MCF 10A (cell line): ENCODE measurements at regions of chr2 and their contacts with region 1.

Region 1: DNA sequence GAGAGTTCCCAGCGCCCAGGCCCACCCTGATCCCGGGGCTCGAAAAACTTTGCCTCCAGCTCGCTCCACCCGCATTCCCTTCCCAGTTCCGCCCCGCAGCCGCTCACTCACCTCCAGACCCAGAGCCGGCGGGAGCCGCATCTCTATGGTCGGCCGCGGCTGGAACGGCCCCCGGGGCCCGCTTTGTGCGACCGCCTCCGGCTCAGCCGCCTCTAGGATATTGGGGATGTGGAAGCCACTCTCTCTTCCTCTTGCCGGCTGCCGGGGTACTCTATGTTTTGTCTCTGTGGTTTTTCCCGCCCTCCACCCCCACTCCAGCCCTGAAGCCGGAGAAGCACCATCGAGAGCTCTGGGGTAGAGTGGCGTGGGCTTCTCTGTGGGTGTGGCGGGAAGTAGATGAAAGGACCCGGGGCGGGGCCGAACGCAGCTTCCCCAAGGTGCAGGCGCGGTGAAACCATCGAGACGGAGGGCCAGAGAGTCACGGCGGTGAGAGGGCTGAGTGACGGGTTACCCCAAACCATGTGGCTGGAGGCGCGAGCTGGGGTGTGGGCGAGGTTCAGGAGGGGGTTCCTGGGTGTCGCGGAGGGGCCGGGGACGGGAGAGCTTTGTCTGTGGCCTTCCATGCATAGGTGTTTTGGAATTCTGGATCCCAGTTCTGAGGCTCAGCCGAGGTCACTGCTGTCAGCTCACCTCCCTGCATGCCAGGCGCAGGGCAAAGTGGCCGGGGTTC is at the starts of genes BCS1L and ZNF142:
- DNase-seq: peak; percentile 94
- H3K4me3 Mint-ChIP-seq: peak within 1 kb of the TSS; percentile 92
- H3K27ac Mint-ChIP-seq: peak within 1 kb of the TSS; percentile 82
- H3K4me1 Mint-ChIP-seq: peaks cover 27% of the 10 kb centered on the region
- H3K27me3 Mint-ChIP-seq: no peaks in the 10 kb centered on the region
- CTCF ChIP-seq: no peak
- total RNA-seq, gene BCS1L: 71.1 and 96.0 TPM in 2 replicates
- total RNA-seq, gene ZNF142: 33.7 and 37.8 TPM in 2 replicates

Region 2: DNA sequence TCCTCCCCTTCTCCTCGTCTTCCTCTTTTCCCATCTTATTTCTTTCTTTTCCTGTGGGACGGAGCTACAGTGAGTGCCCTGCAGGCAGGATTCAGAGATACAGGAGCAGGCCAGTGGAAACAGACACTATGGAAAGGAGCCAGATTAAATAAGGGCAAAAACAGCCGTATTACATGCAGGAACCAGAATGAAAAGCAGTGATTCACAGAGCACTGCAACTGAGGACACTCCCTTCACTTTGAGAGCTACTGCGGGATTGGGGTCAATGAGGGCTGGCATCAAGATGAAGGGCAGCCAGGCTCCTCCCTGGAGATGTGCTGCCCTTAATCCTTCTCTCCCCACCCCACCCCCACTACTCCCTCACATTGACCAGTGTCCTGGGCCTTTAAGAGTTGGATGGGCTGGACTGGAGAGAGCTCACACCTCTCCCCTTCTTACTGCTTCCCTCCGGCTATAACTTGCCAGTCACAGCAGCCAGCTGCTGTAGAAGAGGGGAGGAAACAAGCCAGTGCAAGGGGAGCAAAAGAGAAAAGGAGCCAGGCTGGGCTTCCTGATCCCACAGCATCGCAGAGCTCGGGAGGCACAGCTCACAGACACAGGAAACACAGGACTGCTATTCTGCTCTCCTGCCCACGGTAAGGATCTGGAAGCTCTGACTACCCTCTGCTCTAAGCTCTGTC is 51.8 kb before region 1 on chr2 and contains the start of gene PLCD4:
- CTCF ChIA-PET with region 1: no interaction called
- POLR2A ChIA-PET with region 1: interaction called, 13 read pairs
- intact Hi-C with region 1: no loop called
- DNase-seq: peak; percentile 79
- H3K4me3 Mint-ChIP-seq: peak within 1 kb of the TSS; percentile 36
- H3K27ac Mint-ChIP-seq: peak within 1 kb of the TSS; percentile 92
- H3K4me1 Mint-ChIP-seq: peaks cover 32% of the 10 kb centered on the region
- H3K27me3 Mint-ChIP-seq: no peaks in the 10 kb centered on the region
- CTCF ChIP-seq: no peak
- total RNA-seq, gene PLCD4: 0.40 and 0.86 TPM in 2 replicates

Region 3: GRCh38 chr2:218671654-218672566 is 12.5 kb after region 1 on chr2 and contains the starts of genes RNF25 and STK36:
- CTCF ChIA-PET with region 1: interaction called, 7 read pairs
- POLR2A ChIA-PET with region 1: interaction called, 105 read pairs
- intact Hi-C with region 1: loop called (anchors 1 kb)
- DNase-seq: peak; percentile 66
- H3K4me3 Mint-ChIP-seq: peak within 1 kb of the TSS; percentile 96
- H3K27ac Mint-ChIP-seq: peak within 1 kb of the TSS; percentile 97
- H3K4me1 Mint-ChIP-seq: peaks cover 18% of the 10 kb centered on the region
- H3K27me3 Mint-ChIP-seq: no peaks in the 10 kb centered on the region
- CTCF ChIP-seq: no peak
- total RNA-seq, gene RNF25: 58.9 and 60.8 TPM in 2 replicates
- total RNA-seq, gene STK36: 20.7 and 35.1 TPM in 2 replicates

Region 4: DNA sequence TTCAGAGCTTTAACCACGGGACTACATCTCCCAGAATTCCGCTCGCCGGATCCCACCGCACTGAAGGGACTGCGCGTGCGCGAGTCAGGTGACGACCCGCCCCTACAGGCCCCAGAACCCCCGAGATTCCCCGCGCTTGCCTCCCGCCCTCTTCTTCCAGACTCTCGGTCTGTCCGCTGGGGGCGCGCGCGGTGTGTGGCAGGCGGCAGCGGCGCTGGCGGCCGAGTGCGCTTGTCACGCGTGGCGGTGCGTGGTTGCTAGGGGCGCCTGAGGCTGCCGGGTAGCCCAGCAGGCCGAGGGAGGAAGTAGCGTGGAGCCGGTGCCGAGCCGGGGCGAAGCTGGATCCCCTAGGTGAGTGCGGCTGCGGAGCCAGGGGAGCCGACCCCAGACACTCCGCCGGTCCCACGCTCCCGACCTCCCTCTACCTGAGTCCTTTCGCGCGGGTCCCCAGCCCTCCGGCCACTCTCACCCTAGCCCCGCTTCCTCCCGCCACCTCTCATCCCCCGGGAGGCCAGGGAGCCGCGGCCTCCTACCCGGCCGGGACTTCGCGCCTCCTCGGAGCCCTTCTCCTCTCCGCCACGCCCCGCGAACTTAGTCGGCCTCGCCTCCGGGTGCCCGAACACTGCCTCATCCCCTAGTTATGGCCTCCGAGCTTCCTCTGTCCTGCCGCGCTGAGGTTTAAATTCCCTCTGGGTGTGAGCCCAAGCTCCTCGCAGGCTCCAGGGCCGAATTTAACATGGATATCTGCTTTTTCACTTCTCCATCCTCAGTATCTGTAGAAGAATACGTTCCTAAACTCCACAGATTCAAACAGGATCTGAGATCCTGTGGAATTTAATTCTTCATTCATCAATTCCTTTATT is 51.5 kb after region 1 on chr2 and contains the start of gene TTLL4:
- CTCF ChIA-PET with region 1: interaction called, 10 read pairs
- POLR2A ChIA-PET with region 1: interaction called, 9 read pairs
- intact Hi-C with region 1: loop called (anchors 1 kb)
- DNase-seq: peak; percentile 97
- H3K4me3 Mint-ChIP-seq: peak within 1 kb of the TSS; percentile 98
- H3K27ac Mint-ChIP-seq: peak within 1 kb of the TSS; percentile 92
- H3K4me1 Mint-ChIP-seq: peaks cover 15% of the 10 kb centered on the region
- H3K27me3 Mint-ChIP-seq: no peaks in the 10 kb centered on the region
- CTCF ChIP-seq: peak; percentile 70
- total RNA-seq, gene TTLL4: 33.6 and 38.2 TPM in 2 replicates

Region 5: DNA sequence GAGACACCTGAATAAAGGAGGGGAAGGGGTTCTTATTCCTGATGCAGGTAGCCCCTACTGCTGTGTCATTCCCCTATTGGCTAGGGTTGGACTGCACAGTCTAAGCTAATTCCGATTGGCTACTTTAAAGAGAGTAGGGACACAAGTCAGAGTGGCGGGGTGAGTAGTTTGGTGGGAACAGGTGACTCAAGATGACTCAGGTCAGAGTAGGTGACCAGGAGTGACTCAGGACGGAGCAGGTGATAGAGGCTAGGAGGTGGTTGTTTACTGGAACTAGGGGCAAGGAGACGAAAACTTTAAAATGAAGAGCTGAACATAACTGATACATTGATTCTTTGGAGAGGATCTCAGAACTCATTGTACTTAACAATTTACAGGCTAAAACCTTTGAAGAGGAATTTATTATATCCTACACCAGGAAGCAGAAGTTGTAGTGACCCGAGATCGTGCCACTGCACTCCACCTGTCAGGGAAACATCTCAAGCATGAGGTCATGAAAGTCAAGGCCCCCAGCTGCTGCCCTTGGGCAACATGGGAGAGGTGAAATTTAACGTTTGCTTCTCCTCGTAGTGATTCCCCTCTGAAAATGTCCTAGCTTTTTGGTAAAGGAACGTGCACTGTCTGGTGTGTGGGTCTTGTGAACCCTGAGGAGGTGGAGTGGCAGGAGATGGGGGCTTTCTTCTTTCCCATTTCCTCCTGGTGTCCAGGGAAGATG is 118.0 kb after region 1 on chr2:
- CTCF ChIA-PET with region 1: no interaction called
- POLR2A ChIA-PET with region 1: no interaction called
- intact Hi-C with region 1: no loop called
- DNase-seq: no peak
- H3K4me3 Mint-ChIP-seq: no peak overlapping the region
- H3K27ac Mint-ChIP-seq: no peak overlapping the region
- H3K4me1 Mint-ChIP-seq: no peaks in the 10 kb centered on the region
- H3K27me3 Mint-ChIP-seq: no peaks in the 10 kb centered on the region
- CTCF ChIP-seq: no peak